Activated CD8-positive, alpha-beta T cell treated with anti-CD3 and anti-CD28 coated beads for 36 hours (primary cell): ENCODE measurements at regions of chr4 and their contacts with region 1.

Region 1: DNA sequence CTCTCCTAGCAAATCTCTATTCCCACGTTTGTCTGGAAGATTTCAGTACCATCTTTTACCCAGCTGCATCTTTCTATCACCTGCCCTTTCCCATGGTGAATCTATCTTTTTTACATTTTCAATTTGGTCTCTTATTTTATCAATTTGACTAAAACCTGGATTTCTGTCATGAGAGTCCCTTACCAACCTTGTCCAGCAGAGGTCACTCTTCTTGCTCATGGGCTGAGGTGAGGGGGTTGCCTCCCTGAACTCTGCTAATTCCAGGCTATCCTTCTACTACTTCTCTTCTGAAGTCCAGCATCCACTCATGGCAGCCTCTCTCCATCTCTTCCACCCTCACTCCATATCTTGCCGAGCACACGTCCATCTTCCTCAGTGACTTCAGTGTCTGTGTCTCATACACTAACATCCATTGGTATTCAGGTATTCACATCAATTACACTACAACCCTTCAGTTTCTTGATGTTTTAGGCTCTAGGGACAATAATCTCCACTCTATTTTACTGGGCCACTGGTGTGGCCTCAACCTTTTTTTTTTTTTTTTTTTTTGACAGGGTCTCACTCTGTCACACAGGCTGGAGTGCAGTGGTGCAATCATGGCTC is 17.8 kb upstream of the ZNF827 start:
- DNase-seq: peak; percentile 56
- ATAC-seq: peak; percentile 55
- H3K4me3 Mint-ChIP-seq: no peak overlapping the region
- H3K27ac Mint-ChIP-seq: no peak overlapping the region
- H3K4me1 Mint-ChIP-seq: peaks cover 2% of the 10 kb centered on the region
- H3K27me3 Mint-ChIP-seq: peaks cover 5% of the 10 kb centered on the region
- CTCF ChIP-seq: peak; percentile 74

Region 2: DNA sequence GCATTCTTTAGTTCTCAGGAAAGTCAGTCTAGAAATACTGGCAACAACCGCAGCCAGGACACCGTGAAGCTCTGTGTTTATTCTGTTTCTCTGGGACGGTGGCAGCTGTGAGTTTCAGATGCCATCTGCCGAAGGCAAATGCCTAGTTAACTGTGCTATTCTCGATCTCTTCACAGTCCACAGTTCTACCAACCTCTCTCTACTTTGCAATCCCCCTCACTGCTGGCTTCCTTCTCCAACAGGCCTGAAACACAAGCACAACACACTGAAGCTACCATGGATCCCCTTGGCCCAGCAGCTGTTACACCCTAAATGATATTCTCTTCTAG is 136.6 kb before region 1 on chr4:
- CTCF ChIA-PET with region 1: no interaction called
- POLR2A ChIA-PET with region 1: no interaction called
- intact Hi-C with region 1: no loop called
- DNase-seq: no peak
- ATAC-seq: no peak
- H3K4me3 Mint-ChIP-seq: no peak overlapping the region
- H3K27ac Mint-ChIP-seq: no peak overlapping the region
- H3K4me1 Mint-ChIP-seq: peaks cover 25% of the 10 kb centered on the region
- H3K27me3 Mint-ChIP-seq: no peaks in the 10 kb centered on the region
- CTCF ChIP-seq: no peak

Region 3: GRCh38 chr4:145945431-145946155 is 10.8 kb before region 1 on chr4:
- CTCF ChIA-PET with region 1: interaction called, 13 read pairs
- POLR2A ChIA-PET with region 1: no interaction called
- intact Hi-C with region 1: no loop called
- DNase-seq: no peak
- ATAC-seq: no peak
- H3K4me3 Mint-ChIP-seq: no peak overlapping the region
- H3K27ac Mint-ChIP-seq: no peak overlapping the region
- H3K4me1 Mint-ChIP-seq: no peaks in the 10 kb centered on the region
- H3K27me3 Mint-ChIP-seq: peaks cover 4% of the 10 kb centered on the region
- CTCF ChIP-seq: no peak

Region 4: DNA sequence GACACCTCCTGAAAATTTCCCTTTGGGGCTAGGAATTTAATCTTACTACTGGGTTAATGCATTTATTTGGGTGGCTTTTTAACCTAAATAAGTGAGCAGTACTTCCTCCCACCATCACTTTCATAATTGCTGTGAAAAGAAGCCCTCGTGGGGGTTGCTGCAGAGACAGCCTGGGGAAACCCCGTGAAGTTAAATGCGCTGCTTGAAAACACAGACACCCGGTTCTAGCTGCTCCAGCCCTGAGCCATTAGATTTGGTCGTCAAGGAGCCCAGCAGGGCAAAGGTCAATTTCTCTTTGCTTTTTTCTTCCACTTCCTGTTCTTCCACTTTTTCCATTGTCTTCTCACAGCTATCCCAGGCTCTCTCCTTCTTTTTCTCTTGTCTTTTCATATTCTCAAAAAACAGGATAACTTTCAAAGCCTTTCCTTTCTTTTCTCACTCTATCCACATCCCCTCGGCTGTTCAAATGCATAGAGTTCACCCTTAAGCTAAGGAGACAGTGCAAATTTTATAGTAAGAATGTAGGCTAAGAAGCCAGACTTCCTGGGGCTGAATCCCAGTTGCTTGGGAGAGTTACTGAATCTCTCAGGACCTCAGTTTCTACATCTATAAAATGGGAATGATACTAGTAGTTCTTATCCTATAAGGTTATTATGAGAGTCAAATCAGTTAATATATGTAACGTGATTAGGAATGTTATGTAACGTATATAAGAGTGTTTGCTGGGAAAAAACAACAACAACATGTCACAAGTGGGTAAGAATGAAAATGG is 73.7 kb after region 1 on chr4:
- CTCF ChIA-PET with region 1: no interaction called
- POLR2A ChIA-PET with region 1: no interaction called
- intact Hi-C with region 1: no loop called
- DNase-seq: peak; percentile 26
- ATAC-seq: no peak
- H3K4me3 Mint-ChIP-seq: no peak overlapping the region
- H3K27ac Mint-ChIP-seq: no peak overlapping the region
- H3K4me1 Mint-ChIP-seq: peaks cover 7% of the 10 kb centered on the region
- H3K27me3 Mint-ChIP-seq: peaks cover 11% of the 10 kb centered on the region
- CTCF ChIP-seq: no peak